ENCODE measurements at regions of chr19 and their contacts with region 1.

Region 1: DNA sequence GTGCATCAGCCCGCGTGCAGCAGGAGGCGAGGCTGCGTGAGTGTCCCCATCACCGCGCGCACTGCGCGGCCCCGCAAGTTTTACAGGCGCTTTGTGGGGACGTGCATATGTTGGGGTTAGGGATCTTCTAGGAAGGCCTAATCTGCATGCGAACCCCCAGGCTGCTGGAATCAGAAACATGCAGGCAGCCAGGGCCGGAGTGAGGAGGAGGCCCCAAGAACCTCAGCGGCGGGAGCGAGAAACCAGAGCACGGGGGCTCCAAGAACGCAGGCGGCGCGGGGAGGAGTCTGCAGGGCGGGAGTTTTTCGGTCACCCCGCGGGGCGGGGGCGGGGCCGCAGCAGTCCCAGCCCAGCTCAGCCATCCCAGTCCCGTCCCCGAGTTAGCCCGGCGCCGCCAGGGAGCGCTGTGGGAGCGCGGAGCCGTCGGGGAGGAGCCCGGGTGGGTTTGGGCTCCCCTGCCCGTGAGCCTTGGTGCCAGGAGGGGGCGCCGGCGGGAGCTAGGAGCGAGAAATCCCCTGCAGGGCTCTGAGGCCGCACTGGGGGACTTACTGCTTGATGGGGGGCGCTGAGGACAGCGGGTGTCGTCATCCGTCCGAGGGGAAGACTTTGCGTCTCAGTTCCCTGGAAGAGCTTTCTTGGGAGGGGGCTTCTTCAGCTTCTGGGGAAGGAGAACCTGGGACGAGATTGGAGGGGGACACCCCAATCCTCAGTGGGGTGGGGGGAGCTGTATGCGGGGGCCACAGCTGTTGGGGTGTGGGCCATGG is 933 bp upstream of the NRTN start:
- DNase-seq: peak; percentile 74
- H3K4me3 ChIP-seq: peak overlapping the region; percentile 44
- H3K27ac ChIP-seq: no peak overlapping the region
- H3K27me3 ChIP-seq: peaks cover 49% of the 10 kb centered on the region
- CTCF ChIP-seq: peak; percentile 97

Region 2: GRCh38 chr19:5292822-5293611 is 510.9 kb before region 1 on chr19:
- CTCF ChIA-PET with region 1: no interaction called
- POLR2A ChIA-PET with region 1: interaction called, 12 read pairs
- DNase-seq: peak; percentile 36
- H3K4me3 ChIP-seq: peak overlapping the region; percentile 77
- H3K27ac ChIP-seq: no peak overlapping the region
- H3K27me3 ChIP-seq: no peaks in the 10 kb centered on the region
- CTCF ChIP-seq: no peak

Region 3: DNA sequence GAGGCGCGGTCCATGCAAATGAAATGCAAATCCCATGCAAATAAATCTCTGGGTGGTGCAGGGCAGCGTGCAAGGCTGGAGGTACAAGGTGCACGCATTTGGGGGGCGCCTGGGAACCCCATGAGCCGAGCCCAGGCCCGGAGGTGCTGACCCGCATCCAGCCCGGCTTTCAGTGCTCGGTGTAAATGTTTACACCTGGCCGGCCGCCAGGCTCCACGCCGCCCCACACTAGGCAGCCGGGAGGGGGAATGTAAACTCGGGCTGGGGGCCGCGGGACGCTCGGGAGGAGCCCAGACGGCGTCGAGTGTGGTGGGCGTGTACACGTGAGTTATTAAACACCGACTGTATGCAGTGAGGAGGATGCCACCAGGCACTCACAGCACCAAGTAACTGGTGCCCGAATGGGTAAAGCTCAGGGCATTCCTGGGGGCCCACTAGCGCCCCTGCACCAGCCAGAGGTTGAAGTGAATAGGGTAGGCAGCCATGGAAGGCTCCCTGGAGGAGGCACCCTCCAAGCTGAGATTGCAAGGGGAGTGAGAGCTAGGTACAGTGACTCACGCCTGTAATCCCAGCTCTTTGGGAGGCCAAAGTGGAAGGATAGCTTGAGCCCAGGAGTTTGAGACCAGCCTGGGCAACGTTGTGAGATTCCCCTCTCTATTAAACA is 18.4 kb after region 1 on chr19:
- CTCF ChIA-PET with region 1: interaction called, 25 read pairs
- POLR2A ChIA-PET with region 1: no interaction called
- DNase-seq: no peak
- H3K4me3 ChIP-seq: no peak overlapping the region
- H3K27ac ChIP-seq: no peak overlapping the region
- H3K27me3 ChIP-seq: peaks cover 4% of the 10 kb centered on the region
- CTCF ChIP-seq: no peak

Region 4: DNA sequence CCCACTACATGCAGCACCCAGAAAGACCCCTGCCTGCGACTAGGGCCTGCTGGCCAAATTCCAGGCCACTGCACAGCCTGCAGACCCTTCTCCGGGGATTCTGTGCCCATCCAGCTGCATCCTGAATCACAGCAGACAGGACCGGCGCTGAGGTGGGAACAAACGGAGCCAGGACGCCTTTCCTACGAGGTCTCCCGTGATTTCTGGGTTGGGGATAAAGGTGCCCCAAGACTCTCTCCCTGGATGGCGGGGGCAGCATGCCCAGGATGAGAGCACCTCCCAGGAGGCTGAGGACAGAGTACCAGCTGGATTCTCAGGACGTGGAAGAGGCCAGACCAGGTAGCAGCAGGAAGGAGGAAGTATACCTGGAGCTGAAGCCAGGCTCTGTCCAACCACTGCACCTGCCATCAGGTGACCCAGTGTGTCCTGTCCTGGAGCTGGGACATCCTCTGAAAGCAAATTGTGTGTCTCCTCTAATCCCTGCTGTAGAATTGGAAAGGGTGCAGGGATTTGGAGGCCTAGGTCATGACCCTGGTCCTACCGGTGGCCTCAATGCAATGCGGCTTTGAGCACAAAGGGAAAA is 69.8 kb after region 1 on chr19:
- CTCF ChIA-PET with region 1: interaction called, 20 read pairs
- POLR2A ChIA-PET with region 1: no interaction called
- DNase-seq: no peak
- H3K4me3 ChIP-seq: no peak overlapping the region
- H3K27ac ChIP-seq: no peak overlapping the region
- H3K27me3 ChIP-seq: peaks cover 7% of the 10 kb centered on the region
- CTCF ChIP-seq: no peak

Region 5: GRCh38 chr19:5897189-5897969 is 93.4 kb after region 1 on chr19:
- CTCF ChIA-PET with region 1: interaction called, 141 read pairs
- POLR2A ChIA-PET with region 1: interaction called, 15 read pairs
- DNase-seq: no peak
- H3K4me3 ChIP-seq: no peak overlapping the region
- H3K27ac ChIP-seq: no peak overlapping the region
- H3K27me3 ChIP-seq: no peaks in the 10 kb centered on the region
- CTCF ChIP-seq: no peak

Region 6: GRCh38 chr19:5947435-5947834 is 143.5 kb after region 1 on chr19:
- CTCF ChIA-PET with region 1: interaction called, 12 read pairs
- POLR2A ChIA-PET with region 1: no interaction called
- DNase-seq: no peak
- H3K4me3 ChIP-seq: no peak overlapping the region
- H3K27ac ChIP-seq: peak overlapping the region; percentile 21
- H3K27me3 ChIP-seq: no peaks in the 10 kb centered on the region
- CTCF ChIP-seq: no peak

Region 7: DNA sequence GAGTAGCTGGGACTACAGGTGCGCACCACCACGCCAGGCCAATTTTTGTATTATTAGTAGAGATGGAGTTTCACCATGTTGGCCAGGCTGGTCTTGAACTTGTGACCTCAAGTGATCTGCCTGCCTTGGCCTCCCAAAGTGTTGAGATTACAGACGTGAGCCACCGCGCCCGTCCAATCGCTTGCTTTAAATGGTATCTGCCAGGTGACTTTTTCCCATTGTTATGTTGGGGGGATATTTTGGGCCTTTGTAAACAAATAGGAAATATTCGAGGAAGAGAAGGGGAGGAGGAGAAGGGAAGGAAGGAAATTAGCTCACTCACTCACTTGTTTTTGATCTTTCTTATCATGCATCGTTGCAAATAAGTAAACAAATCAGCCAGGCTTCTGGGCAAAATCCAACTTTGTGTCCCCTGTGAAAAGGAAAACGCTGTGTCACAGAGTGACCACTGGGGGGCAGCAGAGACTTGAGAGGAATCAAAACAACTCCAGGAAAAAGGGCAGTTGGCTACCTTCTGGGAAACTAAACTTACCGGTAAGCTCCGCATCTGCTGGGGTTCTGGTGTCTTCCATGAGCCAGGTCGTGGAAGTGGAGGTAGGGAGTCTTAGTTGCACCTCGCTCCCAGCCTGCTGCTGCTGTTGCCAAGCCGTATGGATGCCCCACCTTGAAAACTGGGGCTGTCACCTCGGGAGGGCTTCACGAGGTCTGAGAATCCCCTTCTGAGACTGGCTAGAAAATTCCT is 183.3 kb after region 1 on chr19:
- CTCF ChIA-PET with region 1: interaction called, 29 read pairs
- POLR2A ChIA-PET with region 1: no interaction called
- DNase-seq: peak; percentile 51
- H3K4me3 ChIP-seq: peak overlapping the region; percentile 53
- H3K27ac ChIP-seq: no peak overlapping the region
- H3K27me3 ChIP-seq: no peaks in the 10 kb centered on the region
- CTCF ChIP-seq: peak; percentile 95

Measured in AG04450 (cell line).